ENCODE measurements at regions of chr12 and their contacts with region 1.

Region 1: GRCh38 chr12:6195665-6196535 is 4.3 kb upstream of the CD9 start:
- DNase-seq: peak; percentile 92
- H3K4me3 ChIP-seq: no peak overlapping the region
- H3K27ac ChIP-seq: peak overlapping the region; percentile 93 to 99 (median 95)
- H3K4me1 ChIP-seq: peaks cover 11 to 40% (median 36%) of the 10 kb centered on the region in 4 donors
- H3K27me3 ChIP-seq: no peaks in the 10 kb centered on the region
- CTCF ChIP-seq: peak; percentile 89 to 99 (median 93)
- EP300 ChIP-seq: peak; percentile 69
- POLR2A ChIP-seq: no peak

Region 2: DNA sequence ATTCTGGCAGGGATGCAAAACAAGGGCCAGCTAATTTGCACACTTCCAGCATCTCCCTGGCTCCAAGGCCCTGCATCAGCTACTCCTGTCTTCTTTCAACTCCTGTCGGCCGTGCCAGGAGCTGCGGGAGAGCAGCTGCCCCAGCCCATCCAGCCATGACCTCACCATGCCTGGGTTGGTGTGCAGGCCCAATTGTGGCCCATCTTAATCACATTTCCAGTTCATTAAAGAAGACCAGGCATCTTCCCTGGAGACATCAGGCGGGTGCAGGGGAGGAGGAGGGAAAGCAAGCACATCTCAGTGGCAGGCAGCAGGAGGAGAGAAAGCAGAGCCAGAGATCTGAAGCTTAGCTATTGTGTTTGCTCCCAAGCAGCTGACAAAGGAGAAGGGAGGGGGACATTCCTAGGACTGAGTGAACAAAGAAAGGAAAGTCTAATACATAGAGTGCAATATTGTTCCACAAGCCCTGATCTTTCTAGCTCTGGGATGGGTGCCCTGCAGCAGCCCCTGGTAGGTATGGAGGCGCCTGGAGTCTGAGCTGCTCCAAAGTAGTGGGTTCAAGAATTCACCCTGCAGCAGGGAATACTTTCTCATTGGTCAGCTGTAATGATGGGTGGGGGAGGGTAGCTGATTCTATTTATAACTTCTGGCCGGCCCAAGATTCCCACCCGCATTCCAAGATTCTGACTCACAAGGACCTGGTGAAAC is 111.5 kb before region 1 on chr12:
- in situ Hi-C with region 1: no loop called
- intact Hi-C with region 1: no loop called
- DNase-seq: peak; percentile 15
- H3K4me3 ChIP-seq: no peak overlapping the region
- H3K27ac ChIP-seq: peak overlapping the region in 3 of 4 donors; percentile 39 to 61 (median 59)
- H3K4me1 ChIP-seq: peaks cover 5 to 24% (median 9%) of the 10 kb centered on the region in 4 donors
- H3K27me3 ChIP-seq: no peaks in the 10 kb centered on the region
- CTCF ChIP-seq: no peak
- EP300 ChIP-seq: no peak
- POLR2A ChIP-seq: no peak

Region 3: GRCh38 chr12:6230321-6231110 is 34.6 kb after region 1 on chr12:
- in situ Hi-C with region 1: no loop called
- intact Hi-C with region 1: loop called (anchors 5 kb)
- DNase-seq: peak; percentile 74
- H3K4me3 ChIP-seq: no peak overlapping the region
- H3K27ac ChIP-seq: peak overlapping the region; percentile 93 to 97 (median 95)
- H3K4me1 ChIP-seq: peaks cover 95 to 100% (median 100%) of the 10 kb centered on the region in 4 donors
- H3K27me3 ChIP-seq: no peaks in the 10 kb centered on the region
- CTCF ChIP-seq: no peak
- EP300 ChIP-seq: peak; percentile 76
- POLR2A ChIP-seq: no peak

Region 4: GRCh38 chr12:6278439-6279255 is 82.7 kb after region 1 on chr12:
- in situ Hi-C with region 1: loop called (anchors 5 to 10 kb)
- intact Hi-C with region 1: no loop called
- DNase-seq: peak; percentile 94
- H3K4me3 ChIP-seq: peak overlapping the region; percentile 36 to 52 (median 42)
- H3K27ac ChIP-seq: peak overlapping the region; percentile 91 to 95 (median 92)
- H3K4me1 ChIP-seq: peaks cover 26 to 35% (median 31%) of the 10 kb centered on the region in 4 donors
- H3K27me3 ChIP-seq: no peaks in the 10 kb centered on the region
- CTCF ChIP-seq: peak; percentile 60 to 95 (median 84)
- EP300 ChIP-seq: peak; percentile 80
- POLR2A ChIP-seq: peak; percentile 70

Measured in transverse colon (tissue), 4 donors.